Posterior vena cava (tissue), 2 donors: ENCODE measurements at regions of chr15 and their contacts with region 1.

Region 1: GRCh38 chr15:65730549-65731172 is 61.4 kb downstream of the DENND4A start:
- DNase-seq: no peak

Region 2: DNA sequence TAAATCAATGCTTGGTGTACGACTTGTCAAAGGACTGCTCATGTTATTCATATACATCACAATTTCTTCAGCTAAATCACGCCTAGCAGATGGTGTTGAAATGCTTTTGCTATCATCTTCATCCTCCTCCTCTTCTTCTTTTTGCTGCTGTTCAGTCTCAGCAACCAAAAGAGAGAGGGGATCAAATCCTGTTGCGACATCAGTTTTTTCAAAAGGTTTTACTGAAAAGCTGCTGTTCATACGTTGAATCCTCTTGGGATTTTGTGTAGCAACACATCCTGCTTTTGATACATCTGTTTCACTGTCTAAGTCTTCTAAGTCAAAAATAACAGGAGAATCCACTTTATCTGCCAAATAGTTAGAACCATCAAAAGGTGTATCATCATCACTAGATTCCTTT is 39.9 kb before region 1 on chr15:
- intact Hi-C with region 1: no loop called
- DNase-seq: no peak

Region 3: DNA sequence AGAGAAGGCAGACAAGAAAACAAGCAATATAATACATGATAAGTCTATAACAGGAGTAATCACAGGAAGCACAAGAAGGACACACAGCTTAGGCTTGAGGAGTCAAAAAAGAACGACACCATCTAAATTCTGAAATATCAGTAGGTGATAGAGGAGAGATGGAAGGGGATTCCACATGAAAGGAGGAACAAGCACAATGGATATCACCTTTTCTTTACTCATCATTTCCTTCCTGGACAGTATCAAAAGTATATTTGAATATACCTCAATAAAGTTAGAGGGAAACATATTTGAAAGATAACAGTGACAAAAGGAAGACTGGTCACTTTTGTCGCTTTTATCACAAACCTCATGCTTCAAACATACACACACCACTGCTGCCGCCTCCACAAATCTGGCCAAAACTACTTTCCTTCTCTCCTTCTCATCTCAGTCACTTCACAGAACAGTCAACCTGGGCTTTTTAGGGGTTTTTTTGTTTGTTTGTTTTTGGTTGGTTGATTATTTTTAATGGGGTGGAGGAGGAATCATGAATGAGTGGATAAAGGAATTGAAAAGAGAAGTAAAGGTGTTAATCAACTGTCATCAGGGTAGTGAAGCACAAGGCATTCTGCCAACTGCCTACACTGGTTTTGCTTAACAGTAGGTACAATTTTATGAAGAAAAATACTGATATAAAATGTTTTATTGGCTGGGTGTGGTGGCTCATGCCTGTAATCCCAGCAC is 42.9 kb after region 1 on chr15:
- intact Hi-C with region 1: loop called in 1 of 2 experiments (anchors 2 kb)
- DNase-seq: no peak